SK-N-SH (cell line): ENCODE measurements at regions of chr17 and their contacts with region 1.

Region 1: GRCh38 chr17:7887482-7888183 is 956 bp upstream of the CHD3 start:
- DNase-seq: peak; percentile 93
- H3K4me3 ChIP-seq: peak overlapping the region; percentile 76 to 78
- H3K27ac ChIP-seq: peak overlapping the region; percentile 96 to 100
- H3K4me1 ChIP-seq: peaks cover 36 to 47% of the 10 kb centered on the region in 2 experiments
- H3K27me3 ChIP-seq: no peaks in the 10 kb centered on the region
- CTCF ChIP-seq: no peak
- EP300 ChIP-seq: peak in 1 of 2 experiments; percentile 90; a peak in 3 of 4 replicates
- RAD21 ChIP-seq: no peak

Region 2: DNA sequence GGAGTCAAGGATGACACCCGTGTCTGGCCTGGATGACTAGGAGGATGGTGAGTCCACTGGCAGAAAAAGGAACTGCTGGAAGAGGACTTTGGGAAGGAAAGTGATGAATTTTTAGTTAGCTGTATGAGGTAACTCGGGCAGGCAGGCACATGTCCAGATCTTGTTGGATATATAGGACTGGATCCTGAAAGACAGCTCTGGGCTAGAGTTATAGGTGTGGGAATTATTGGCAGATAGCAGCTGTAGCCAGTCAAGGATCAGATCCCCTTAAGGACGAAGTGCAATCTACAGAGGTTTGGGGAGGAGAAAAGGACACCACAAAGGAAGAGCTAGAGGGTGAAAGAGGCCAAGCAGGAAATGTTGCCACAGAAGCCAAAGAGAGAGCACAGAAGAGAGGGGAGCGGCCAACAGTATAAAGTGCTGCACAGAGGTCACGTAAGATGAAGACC is 19.7 kb before region 1 on chr17:
- CTCF ChIA-PET with region 1: interaction called, 18 read pairs
- POLR2A ChIA-PET with region 1: no interaction called
- DNase-seq: no peak
- H3K4me3 ChIP-seq: no peak overlapping the region
- H3K27ac ChIP-seq: no peak overlapping the region
- H3K4me1 ChIP-seq: peaks cover 0 to 3% of the 10 kb centered on the region in 2 experiments; a peak in 2 of 4 replicates
- H3K27me3 ChIP-seq: no peaks in the 10 kb centered on the region
- CTCF ChIP-seq: no peak
- EP300 ChIP-seq: no peak
- RAD21 ChIP-seq: no peak